B cell (primary cell): ENCODE measurements at regions of chr9 and their contacts with region 1.

Region 1: DNA sequence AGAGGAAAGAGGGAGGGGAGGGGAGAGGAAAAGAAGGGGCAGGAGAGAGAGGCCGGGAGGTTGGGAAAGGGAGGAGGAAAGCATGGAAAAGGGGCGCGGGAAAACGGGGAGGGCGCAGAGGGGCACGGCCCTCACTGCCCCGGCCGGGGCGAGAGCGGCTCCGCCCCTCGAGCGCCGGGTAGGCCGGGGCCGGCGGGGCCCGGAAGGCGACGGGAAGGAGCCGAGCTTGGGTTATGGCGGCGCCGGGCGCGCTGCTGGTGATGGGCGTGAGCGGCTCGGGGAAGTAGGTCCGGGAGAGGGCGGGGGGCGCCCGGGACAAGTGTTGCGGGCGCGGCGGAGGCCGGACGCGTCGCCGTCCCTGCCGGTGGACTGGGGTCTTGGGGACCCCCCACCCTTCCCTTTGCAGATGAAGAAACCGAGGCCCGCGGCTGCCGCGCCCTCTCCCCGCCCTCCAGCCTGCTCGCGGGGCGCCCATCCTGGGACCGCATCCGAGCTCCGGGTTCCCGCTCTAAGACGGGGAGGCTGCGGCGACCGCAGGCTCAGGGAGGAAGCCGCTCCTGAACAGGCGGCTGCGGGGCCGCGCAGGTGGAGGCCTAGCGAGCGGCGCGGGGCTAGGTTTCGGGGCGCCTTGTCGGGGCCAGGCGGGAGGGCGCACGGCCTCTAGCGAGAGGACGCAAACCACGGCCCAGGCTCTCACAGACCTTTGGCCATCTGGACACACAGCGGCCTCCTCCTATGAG is at the start of gene IDNK:
- DNase-seq: peak; percentile 85
- ATAC-seq: peak; percentile 88
- H3K4me3 ChIP-seq: peak within 1 kb of the TSS; percentile 47 to 87 (median 79)
- H3K4me3 Mint-ChIP-seq: peak within 1 kb of the TSS; percentile 94
- H3K27ac ChIP-seq: peak within 1 kb of the TSS; percentile 76 to 88
- H3K27ac Mint-ChIP-seq: peak within 1 kb of the TSS; percentile 98
- H3K4me1 ChIP-seq: peaks cover 9 to 21% of the 10 kb centered on the region in 2 donors
- H3K4me1 Mint-ChIP-seq: peaks cover 33% of the 10 kb centered on the region
- H3K27me3 ChIP-seq: no peaks in the 10 kb centered on the region
- H3K27me3 Mint-ChIP-seq: no peaks in the 10 kb centered on the region
- CTCF ChIP-seq: no peak
- total RNA-seq, gene IDNK: 11.2 and 11.6 TPM in 2 replicates

Region 2: DNA sequence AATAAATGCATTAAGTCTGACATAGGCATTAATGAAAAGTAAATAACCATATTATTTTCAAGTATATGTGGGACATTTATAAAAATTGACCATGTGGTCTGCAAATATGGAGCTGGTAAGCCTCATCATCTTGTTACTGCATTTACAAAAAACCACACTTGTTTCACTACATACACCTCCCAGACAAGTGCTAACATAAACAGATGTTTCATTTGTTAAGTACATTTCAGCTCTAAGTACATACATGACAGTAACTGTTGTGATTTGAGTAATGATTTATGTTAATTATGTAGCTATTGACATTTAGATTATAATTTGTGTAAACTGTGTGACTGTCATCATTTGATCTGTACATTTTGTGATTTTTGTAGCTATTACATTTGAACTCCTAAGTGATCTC is 13.7 kb after region 1 on chr9:
- CTCF ChIA-PET with region 1: interaction called, 12 read pairs
- POLR2A ChIA-PET with region 1: interaction called, 6 read pairs
- intact Hi-C with region 1: no loop called
- DNase-seq: no peak
- ATAC-seq: no peak
- H3K4me3 ChIP-seq: no peak overlapping the region
- H3K4me3 Mint-ChIP-seq: no peak overlapping the region
- H3K27ac ChIP-seq: no peak overlapping the region
- H3K27ac Mint-ChIP-seq: no peak overlapping the region
- H3K4me1 ChIP-seq: no peaks in the 10 kb centered on the region
- H3K4me1 Mint-ChIP-seq: no peaks in the 10 kb centered on the region
- H3K27me3 ChIP-seq: no peaks in the 10 kb centered on the region
- H3K27me3 Mint-ChIP-seq: no peaks in the 10 kb centered on the region
- CTCF ChIP-seq: no peak

Region 3: GRCh38 chr9:83707768-83708514 is 84.8 kb after region 1 on chr9 and contains the start of gene UBQLN1:
- CTCF ChIA-PET with region 1: interaction called, 5 read pairs
- POLR2A ChIA-PET with region 1: interaction called, 13 read pairs
- intact Hi-C with region 1: loop called (anchors 1 kb)
- DNase-seq: peak; percentile 97
- ATAC-seq: peak; percentile 83
- H3K4me3 ChIP-seq: peak within 1 kb of the TSS; percentile 75 to 95 (median 87)
- H3K4me3 Mint-ChIP-seq: peak within 1 kb of the TSS; percentile 93
- H3K27ac ChIP-seq: peak within 1 kb of the TSS; percentile 95 to 96
- H3K27ac Mint-ChIP-seq: peak within 1 kb of the TSS; percentile 95
- H3K4me1 ChIP-seq: peaks cover 20% of the 10 kb centered on the region in 2 donors
- H3K4me1 Mint-ChIP-seq: peaks cover 46% of the 10 kb centered on the region
- H3K27me3 ChIP-seq: no peaks in the 10 kb centered on the region
- H3K27me3 Mint-ChIP-seq: no peaks in the 10 kb centered on the region
- CTCF ChIP-seq: no peak
- total RNA-seq, gene UBQLN1: 101 and 108 TPM in 2 replicates

Region 4: DNA sequence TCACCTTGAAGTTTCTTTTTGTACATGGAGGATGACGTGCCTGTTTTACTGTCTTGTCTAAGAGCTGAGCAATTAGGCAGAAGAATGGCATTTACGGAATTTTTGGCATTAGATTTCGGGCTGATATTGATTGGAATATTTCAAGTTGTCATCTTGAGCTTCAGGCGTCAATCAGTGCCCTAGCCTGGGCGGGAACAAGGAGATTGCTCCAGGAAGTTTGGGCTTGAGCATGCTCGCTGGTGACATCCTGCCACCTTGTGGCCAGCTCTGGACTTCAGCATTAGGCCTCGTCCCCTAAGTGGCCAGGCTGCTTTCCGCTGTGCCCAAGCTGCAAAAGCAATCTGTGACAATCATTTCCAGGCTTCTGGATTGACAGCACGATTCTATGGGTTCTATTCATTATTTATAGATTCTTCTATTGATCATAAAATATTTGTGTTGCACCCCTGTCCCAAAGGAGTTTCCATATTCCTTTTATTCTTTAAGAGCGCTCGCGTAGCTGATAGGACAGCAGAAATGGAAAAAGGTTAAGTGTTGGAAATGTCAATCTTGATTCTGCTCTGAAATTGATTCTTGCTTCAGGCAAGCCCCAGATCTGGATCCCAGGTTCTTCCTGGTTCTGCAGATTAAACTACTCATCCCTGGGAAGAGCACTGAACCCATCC is 638.1 kb after region 1 on chr9:
- CTCF ChIA-PET with region 1: interaction called, 6 read pairs
- POLR2A ChIA-PET with region 1: no interaction called
- intact Hi-C with region 1: loop called (anchors 5 kb)
- DNase-seq: peak; percentile 65
- ATAC-seq: peak; percentile 58
- H3K4me3 ChIP-seq: no peak overlapping the region
- H3K4me3 Mint-ChIP-seq: peak overlapping the region; percentile 61
- H3K27ac ChIP-seq: no peak overlapping the region
- H3K27ac Mint-ChIP-seq: no peak overlapping the region
- H3K4me1 ChIP-seq: peaks cover 3 to 8% of the 10 kb centered on the region in 2 donors
- H3K4me1 Mint-ChIP-seq: peaks cover 4% of the 10 kb centered on the region
- H3K27me3 ChIP-seq: peaks cover 0 to 4% (median 2%) of the 10 kb centered on the region in 4 experiments
- H3K27me3 Mint-ChIP-seq: peaks cover 24% of the 10 kb centered on the region
- CTCF ChIP-seq: peak; percentile 79